Cardiac septum (tissue), 1 donor: ENCODE measurements at regions of chr3 and their contacts with region 1.

Region 1: DNA sequence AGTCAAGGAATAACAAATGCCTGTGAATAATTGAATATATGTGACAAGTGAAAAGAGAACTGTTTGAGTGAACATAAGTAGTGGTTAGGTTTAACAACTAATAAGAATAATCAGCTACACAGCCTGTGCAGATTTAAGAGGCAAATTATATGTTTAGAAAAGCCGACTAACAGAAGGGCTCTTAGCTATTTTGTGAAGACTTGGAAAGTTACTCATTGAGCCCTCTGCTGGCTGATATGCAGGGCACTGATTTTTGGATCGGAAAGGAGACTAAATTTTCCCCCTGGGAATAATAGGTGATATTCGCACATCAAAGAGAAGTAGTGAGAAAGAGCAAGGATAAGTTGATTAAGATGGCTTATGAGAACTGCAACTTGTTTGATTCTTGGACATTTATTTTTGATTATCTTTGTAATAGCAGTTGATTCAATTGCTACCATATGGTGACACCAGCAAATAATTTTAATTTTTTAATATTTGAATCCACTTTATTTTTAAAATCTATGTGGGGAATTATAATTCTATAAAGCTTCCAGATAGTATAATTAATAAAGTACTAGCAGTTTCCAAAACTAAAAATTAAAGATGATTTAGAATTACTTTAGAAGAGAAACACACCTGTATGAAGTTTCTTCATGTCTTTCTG is 156.2 kb downstream of the NLGN1 start:
- DNase-seq: no peak

Region 2: GRCh38 chr3:173411375-173411973 is 142.3 kb before region 1 on chr3:
- intact Hi-C with region 1: loop called (anchors 5 kb)
- DNase-seq: no peak

Region 3: GRCh38 chr3:173945170-173945569 is 391.4 kb after region 1 on chr3:
- intact Hi-C with region 1: no loop called
- DNase-seq: no peak

Region 4: DNA sequence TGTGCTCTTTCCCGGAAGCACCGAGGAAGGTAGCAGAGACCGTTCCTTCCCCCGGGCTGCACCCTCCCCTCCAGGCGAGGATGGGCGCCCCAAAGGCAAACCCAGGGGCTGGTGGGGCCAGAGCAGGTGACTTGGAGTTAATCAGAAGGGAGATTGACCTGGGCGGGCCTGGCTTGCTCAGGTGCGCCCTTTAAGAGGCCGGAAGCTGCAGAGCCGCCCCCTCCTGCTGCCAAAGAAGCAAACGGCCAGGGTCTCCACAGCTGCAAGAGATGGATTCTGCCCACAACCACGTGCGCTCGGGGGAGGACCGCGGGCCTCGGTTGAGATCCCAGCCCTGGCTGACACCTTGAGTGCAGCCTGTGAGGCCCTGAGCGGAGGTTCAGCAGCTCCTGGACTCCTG is 1087.2 kb after region 1 on chr3:
- intact Hi-C with region 1: no loop called
- DNase-seq: no peak